Dorsolateral prefrontal cortex (tissue), 120 donors: ENCODE measurements at regions of chr17 and their contacts with region 1.

Region 1: GRCh38 chr17:40909351-40909750 is 24.3 kb upstream of the KRT20 start:
- DNase-seq: peak in 9 of 10 donors; percentile 68 to 82 (median 71)
- H3K4me3 ChIP-seq: no peak overlapping the region
- H3K27ac ChIP-seq: peak overlapping the region in 22 of 59 donors; percentile 2 to 78 (median 42)
- H3K27me3 ChIP-seq: peaks cover 0 to 17% (median 0%) of the 10 kb centered on the region in 45 donors
- CTCF ChIP-seq: peak; percentile 61 to 98 (median 84)

Region 2: GRCh38 chr17:41322094-41322902 is 412.9 kb after region 1 on chr17:
- intact Hi-C with region 1: loop called (anchors 5 to 10 kb)
- DNase-seq: no peak
- H3K4me3 ChIP-seq: no peak overlapping the region
- H3K27ac ChIP-seq: no peak overlapping the region
- H3K27me3 ChIP-seq: peaks cover 0 to 3% (median 0%) of the 10 kb centered on the region in 45 donors
- CTCF ChIP-seq: peak; percentile 22 to 73 (median 62)

Region 3: DNA sequence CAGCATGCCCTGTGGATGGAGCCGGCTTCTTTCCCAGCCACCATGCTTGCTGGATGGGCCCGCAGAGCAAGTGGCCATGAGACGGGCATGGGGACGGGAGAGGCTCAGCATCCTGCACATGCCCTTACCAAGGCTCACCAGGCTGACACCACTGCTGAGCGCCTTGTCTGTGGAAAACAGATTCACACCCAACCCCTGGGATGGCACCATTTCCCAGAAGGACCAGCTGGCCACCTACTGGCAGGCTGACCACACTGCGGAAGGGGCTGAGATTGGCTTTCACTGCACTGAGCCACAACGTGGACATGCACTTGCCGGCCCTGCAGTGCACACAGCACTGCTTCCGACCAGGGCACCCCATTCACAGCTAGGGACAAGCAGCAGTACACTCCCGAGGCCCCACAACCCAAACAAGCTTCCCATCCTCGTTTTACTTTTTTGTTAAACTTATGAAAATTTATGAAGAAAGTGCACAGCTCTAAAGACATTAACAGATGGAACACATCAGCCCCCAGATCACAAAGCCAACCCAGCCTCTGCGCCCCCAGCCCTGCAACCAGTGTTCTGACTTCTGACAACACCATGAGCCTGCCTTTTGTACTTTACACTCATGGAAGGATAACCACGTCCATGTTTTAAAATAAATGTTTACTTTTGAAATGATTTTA is 420.1 kb after region 1 on chr17:
- intact Hi-C with region 1: loop called (anchors 5 to 10 kb)
- DNase-seq: peak in 4 of 10 donors; percentile 23 to 56 (median 45)
- H3K4me3 ChIP-seq: no peak overlapping the region
- H3K27ac ChIP-seq: no peak overlapping the region
- H3K27me3 ChIP-seq: peaks cover 0 to 26% (median 0%) of the 10 kb centered on the region in 45 donors
- CTCF ChIP-seq: peak in 53 of 56 donors; percentile 22 to 66 (median 53)

Region 4: GRCh38 chr17:41548844-41549595 is 639.7 kb after region 1 on chr17:
- intact Hi-C with region 1: loop called (anchors 2 to 5 kb)
- DNase-seq: peak; percentile 65 to 86 (median 80)
- H3K4me3 ChIP-seq: peak overlapping the region in 53 of 59 donors; percentile 1 to 67 (median 34)
- H3K27ac ChIP-seq: peak overlapping the region in 33 of 59 donors; percentile 0 to 82 (median 57)
- H3K27me3 ChIP-seq: peaks cover 0 to 8% (median 0%) of the 10 kb centered on the region in 45 donors
- CTCF ChIP-seq: peak; percentile 67 to 94 (median 84)

Region 5: DNA sequence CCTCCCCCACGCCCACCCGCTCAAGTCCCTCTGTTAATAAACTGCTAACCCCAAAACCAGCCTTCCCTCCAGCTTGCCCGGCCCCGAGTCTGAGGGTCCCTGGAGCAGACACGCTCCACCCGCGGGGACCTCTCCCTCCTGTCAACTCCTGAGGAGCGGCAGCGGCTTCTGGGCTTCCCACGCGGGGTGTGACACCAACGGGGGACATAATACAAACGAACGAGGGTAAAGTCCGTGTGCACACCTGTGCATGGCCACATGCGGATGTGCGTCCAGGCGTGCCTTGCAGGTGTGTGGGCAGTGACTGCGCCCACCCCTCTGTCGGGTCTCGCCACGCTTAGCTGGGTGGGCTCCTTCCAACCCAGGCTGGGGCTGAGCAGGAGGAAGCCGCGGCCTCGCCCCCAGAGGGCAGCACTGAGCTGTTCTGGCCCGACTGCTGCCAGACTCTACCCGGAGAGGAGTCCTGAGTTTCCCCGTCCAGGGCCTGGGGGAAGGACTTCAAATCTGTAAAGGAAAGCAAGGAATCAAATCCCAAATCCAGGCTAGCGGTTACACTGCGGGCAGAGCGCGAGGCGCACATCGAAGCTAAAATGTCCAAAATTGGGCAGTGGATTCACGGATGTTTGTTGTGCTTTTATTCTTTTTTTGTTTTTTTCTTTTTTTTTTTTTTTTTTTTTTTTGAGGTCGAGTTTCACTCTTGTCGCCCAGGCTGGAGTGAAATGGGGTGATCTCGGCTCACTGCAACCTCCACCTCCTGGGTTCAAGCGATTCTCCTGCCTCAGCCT is 739.3 kb after region 1 on chr17:
- intact Hi-C with region 1: loop called (anchors 1 kb)
- DNase-seq: peak; percentile 70 to 89 (median 78)
- H3K4me3 ChIP-seq: peak overlapping the region; percentile 12 to 67 (median 48)
- H3K27ac ChIP-seq: peak overlapping the region in 23 of 59 donors; percentile 13 to 76 (median 46)
- H3K27me3 ChIP-seq: no peaks in the 10 kb centered on the region
- CTCF ChIP-seq: peak; percentile 55 to 98 (median 93)